ENCODE measurements at regions of chr6 and their contacts with region 1.

Region 1: DNA sequence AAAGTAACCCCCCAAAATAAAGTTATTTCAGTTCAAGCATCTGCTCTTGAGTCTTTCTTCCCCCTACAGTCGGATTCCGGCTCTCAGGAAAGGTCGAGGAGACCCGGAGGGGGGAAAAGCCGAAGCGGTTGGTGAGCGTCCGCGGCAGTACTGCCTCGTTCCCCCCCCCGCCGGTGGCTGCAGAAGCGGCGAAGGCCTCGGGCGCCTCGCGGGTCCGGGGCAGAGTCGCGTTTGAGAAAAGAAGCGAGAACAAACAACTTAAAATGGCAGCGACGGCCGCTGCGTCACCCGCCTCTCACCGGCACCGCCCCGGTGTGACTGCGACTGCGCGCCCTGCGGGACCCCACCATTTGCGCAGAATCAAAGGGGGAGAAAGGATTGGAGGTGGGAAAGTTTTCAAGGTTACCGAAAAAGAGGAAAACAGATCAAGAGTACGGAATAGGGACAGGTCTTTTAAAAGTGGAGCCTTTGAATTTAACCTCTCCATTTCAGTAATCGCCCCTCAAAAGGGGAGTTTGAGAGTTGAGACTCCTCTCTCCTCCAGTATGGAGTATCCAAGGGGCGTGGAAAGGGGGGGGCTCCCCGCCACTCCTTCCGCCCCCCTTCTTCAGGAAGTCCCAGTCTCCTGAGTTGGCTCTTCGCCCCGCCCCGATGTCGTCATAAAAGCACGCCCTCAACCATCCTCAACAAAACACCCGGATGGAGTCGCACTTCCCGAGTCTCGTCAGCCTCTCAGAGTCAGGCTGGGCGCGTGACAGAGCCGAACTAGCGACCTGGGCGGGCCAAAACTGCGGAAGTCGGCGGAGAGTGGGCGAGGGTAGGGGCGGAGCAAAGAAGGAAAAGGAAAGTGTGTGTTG is 1.9 kb upstream of the C6orf62 start:
- DNase-seq: peak; percentile 100
- H3K4me3 Mint-ChIP-seq: peak overlapping the region; percentile 97
- H3K27ac Mint-ChIP-seq: peak overlapping the region; percentile 94
- H3K4me1 Mint-ChIP-seq: peaks cover 20% of the 10 kb centered on the region
- H3K27me3 Mint-ChIP-seq: no peaks in the 10 kb centered on the region
- CTCF ChIP-seq: no peak

Region 2: GRCh38 chr6:24245275-24245674 is 475.6 kb before region 1 on chr6:
- CTCF ChIA-PET with region 1: no interaction called
- intact Hi-C with region 1: no loop called
- DNase-seq: no peak
- H3K4me3 Mint-ChIP-seq: no peak overlapping the region
- H3K27ac Mint-ChIP-seq: no peak overlapping the region
- H3K4me1 Mint-ChIP-seq: peaks cover 33% of the 10 kb centered on the region
- H3K27me3 Mint-ChIP-seq: no peaks in the 10 kb centered on the region
- CTCF ChIP-seq: no peak

Region 3: GRCh38 chr6:24743265-24743943 is 22.6 kb after region 1 on chr6:
- CTCF ChIA-PET with region 1: interaction called, 14 read pairs
- intact Hi-C with region 1: no loop called
- DNase-seq: peak; percentile 63
- H3K4me3 Mint-ChIP-seq: peak overlapping the region; percentile 24
- H3K27ac Mint-ChIP-seq: peak overlapping the region; percentile 70
- H3K4me1 Mint-ChIP-seq: peaks cover 27% of the 10 kb centered on the region
- H3K27me3 Mint-ChIP-seq: no peaks in the 10 kb centered on the region
- CTCF ChIP-seq: no peak

Region 4: GRCh38 chr6:24766680-24767462 is 46.0 kb after region 1 on chr6:
- CTCF ChIA-PET with region 1: interaction called, 7 read pairs
- intact Hi-C with region 1: loop called (anchors 1 kb)
- DNase-seq: no peak
- H3K4me3 Mint-ChIP-seq: no peak overlapping the region
- H3K27ac Mint-ChIP-seq: peak overlapping the region; percentile 17
- H3K4me1 Mint-ChIP-seq: peaks cover 25% of the 10 kb centered on the region
- H3K27me3 Mint-ChIP-seq: no peaks in the 10 kb centered on the region
- CTCF ChIP-seq: peak; percentile 67

Region 5: DNA sequence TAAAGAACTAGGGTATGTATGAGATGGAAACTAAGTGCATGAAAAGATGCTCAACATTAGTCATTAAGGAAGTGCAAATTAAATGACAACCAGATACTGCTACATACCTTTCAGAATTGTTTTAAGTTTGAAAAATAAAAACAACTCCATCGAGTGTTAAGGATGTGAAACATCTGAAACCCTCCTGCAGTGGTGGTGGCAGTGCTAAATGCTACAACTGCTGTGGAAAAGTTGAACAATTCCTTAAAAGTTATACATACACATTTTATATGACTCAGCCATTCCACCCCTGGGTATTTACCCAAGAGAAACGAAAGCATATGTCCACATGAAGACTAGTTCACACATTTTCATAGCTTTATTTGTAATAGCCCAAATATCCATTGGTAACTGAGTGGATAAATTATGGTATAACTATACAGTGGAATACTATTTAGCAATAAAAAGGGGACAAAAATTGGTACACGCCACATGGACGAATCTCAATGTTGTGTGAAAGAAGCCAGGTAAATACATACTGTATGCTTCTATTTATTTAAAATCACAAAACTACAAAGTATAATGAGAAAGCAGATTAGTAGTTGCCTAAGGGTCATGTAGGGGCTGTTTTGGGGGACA is 67.3 kb after region 1 on chr6:
- CTCF ChIA-PET with region 1: no interaction called
- intact Hi-C with region 1: no loop called
- DNase-seq: no peak
- H3K4me3 Mint-ChIP-seq: no peak overlapping the region
- H3K27ac Mint-ChIP-seq: no peak overlapping the region
- H3K4me1 Mint-ChIP-seq: peaks cover 1% of the 10 kb centered on the region
- H3K27me3 Mint-ChIP-seq: no peaks in the 10 kb centered on the region
- CTCF ChIP-seq: no peak

Measured in Calu3 (cell line).